HCT116 (cell line): ENCODE measurements at regions of chr6 and their contacts with region 1.

Region 1: GRCh38 chr6:125099211-125100073 is 54.1 kb upstream of the TPD52L1 start:
- DNase-seq: peak; percentile 49
- ATAC-seq: peak; percentile 97
- H3K4me3 ChIP-seq: peak overlapping the region; percentile 47 to 58
- H3K27ac ChIP-seq: no peak overlapping the region
- H3K4me1 ChIP-seq: peaks cover 9 to 48% of the 10 kb centered on the region in 2 experiments; a peak in 3 of 4 replicates
- H3K27me3 ChIP-seq: no peaks in the 10 kb centered on the region
- CTCF ChIP-seq: 0 out of 6 replicates have a peak, but pooled peaks of 1 of the 3 experiments have one; percentile 10
- POLR2A ChIP-seq: no peak
- RAD21 ChIP-seq: no peak

Region 2: GRCh38 chr6:124961777-124962611 is 137.4 kb before region 1 on chr6 and contains the start of gene RNF217:
- CTCF ChIA-PET with region 1: no interaction called
- POLR2A ChIA-PET with region 1: no interaction called
- RAD21 ChIA-PET with region 1: no interaction called
- intact Hi-C with region 1: loop called (anchors 10 kb)
- DNase-seq: no peak
- ATAC-seq: peak; percentile 69
- H3K4me3 ChIP-seq: peak within 1 kb of the TSS; percentile 66 to 71
- H3K27ac ChIP-seq: peak within 1 kb of the TSS; percentile 85
- H3K4me1 ChIP-seq: peaks cover 31 to 59% of the 10 kb centered on the region in 2 experiments
- H3K27me3 ChIP-seq: no peaks in the 10 kb centered on the region
- CTCF ChIP-seq: no peak
- POLR2A ChIP-seq: peak; percentile 55
- RAD21 ChIP-seq: no peak
- total RNA-seq, gene RNF217: 20.4 TPM